ENCODE measurements at regions of chr1 and their contacts with region 1.

Region 1: DNA sequence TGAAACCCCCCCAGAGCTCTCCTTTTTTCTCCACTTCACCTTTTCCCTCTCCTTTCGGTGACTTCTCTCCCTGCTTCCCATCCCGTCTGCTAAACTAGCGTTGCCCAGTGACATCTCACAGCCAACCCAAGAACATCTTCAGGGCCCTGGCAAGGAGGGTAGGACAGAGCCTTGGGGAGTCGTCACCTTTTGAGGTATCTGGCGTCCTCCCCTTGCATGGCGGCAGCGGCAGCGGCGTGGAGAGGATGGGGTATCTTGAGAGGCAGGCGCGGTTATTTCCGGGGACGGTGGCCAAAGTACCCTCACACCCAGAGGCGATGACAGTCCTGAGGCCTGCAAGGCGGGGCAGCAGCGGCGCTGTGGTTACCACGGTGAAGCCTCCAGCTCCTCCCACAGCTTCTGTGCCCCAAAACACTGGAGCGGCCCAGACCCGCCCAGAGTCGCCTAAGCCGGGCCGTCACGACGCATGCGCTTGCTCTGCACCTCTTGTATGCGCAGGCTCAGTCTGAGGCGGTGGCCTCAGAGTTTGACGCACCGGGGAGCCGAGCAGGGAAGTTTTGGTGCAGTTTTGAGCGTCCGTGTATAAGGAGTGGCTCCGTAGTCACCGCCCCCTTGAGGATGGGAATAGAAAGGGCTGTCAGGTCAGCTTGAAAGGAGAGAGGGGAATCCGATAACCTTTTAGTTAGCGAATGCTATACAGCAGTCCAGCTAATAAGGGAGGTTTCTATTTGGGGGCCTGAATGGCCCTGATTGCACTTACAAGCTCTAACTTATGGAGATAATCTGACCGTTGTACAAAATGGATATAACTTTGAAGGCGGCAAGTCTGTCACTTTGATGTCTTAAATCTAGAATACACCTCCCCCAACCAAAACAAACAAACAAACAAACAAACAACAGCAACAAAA is at the start of gene KIFAP3:
- DNase-seq: peak; percentile 93 to 97 (median 95)
- H3K4me3 ChIP-seq: peak within 1 kb of the TSS; percentile 71 to 77
- H3K4me3 Mint-ChIP-seq: peak within 1 kb of the TSS; percentile 90 to 98 (median 96)
- H3K27ac ChIP-seq: peak within 1 kb of the TSS; percentile 74
- H3K27ac Mint-ChIP-seq: peak within 1 kb of the TSS; percentile 85 to 99 (median 97)
- H3K4me1 ChIP-seq: peaks cover 44% of the 10 kb centered on the region
- H3K4me1 Mint-ChIP-seq: peaks cover 39 to 61% (median 47%) of the 10 kb centered on the region in 4 donors
- H3K27me3 ChIP-seq: no peaks in the 10 kb centered on the region
- H3K27me3 Mint-ChIP-seq: peaks cover 0 to 2% of the 10 kb centered on the region in 2 donors
- total RNA-seq, gene KIFAP3: 20.2 to 22.2 TPM

Region 2: DNA sequence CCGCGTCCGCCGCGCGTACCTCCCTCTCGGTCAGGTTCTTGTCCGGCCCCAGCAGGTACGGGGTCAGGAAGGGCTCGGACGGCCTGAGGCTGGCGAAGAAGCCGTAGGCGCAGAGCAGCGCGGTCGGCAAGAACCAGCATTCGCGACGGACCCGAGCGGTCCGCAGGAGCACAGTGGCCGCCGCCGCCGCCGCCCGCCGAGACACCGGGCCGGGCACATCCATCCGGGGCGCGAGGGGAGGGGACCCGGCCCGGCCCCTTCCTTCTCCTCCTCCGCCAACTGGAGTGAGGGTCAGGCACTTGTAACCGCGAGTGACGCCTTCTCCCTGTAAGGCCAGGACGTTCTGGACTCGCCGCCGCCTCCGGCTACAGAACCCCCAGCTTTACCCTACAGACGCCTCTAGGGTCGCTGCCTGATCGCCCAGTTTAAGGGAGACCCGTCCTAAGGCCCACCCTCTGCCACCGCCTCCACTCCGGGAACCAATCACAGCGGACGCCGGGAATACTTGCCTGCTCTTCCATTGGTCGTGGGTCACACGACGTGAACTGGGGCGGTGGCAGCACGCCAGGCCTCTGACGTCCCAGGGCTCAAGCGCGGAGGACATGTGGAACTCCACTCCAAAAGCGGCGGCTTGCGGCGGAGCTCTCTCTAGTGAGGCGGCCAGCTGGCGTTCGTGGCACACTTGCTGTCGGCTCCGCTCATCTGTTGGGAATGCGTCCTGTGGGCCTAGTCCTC is 588.8 kb before region 1 on chr1 and contains the start of gene SLC19A2:
- CTCF ChIA-PET with region 1: no interaction called
- POLR2A ChIA-PET with region 1: interaction called, 3 read pairs
- intact Hi-C with region 1: loop called (anchors 10 kb)
- DNase-seq: peak; percentile 89 to 96 (median 91)
- H3K4me3 ChIP-seq: peak within 1 kb of the TSS; percentile 60 to 63
- H3K4me3 Mint-ChIP-seq: peak within 1 kb of the TSS; percentile 93 to 97 (median 95)
- H3K27ac ChIP-seq: peak within 1 kb of the TSS; percentile 73
- H3K27ac Mint-ChIP-seq: peak within 1 kb of the TSS; percentile 88 to 96 (median 94)
- H3K4me1 ChIP-seq: peaks cover 20% of the 10 kb centered on the region
- H3K4me1 Mint-ChIP-seq: peaks cover 28 to 37% (median 30%) of the 10 kb centered on the region in 4 donors
- H3K27me3 ChIP-seq: no peaks in the 10 kb centered on the region
- H3K27me3 Mint-ChIP-seq: no peaks in the 10 kb centered on the region
- total RNA-seq, gene SLC19A2: 4.1 to 4.5 TPM

Region 3: GRCh38 chr1:170531758-170532657 is 457.5 kb after region 1 on chr1 and contains the start of gene GORAB:
- CTCF ChIA-PET with region 1: interaction called, 4 read pairs
- POLR2A ChIA-PET with region 1: interaction called, 3 read pairs
- intact Hi-C with region 1: loop called (anchors 5 kb)
- DNase-seq: peak; percentile 84 to 93 (median 90)
- H3K4me3 ChIP-seq: peak within 1 kb of the TSS; percentile 87 to 90
- H3K4me3 Mint-ChIP-seq: no peak within 1 kb of the TSS
- H3K27ac ChIP-seq: peak within 1 kb of the TSS; percentile 92
- H3K27ac Mint-ChIP-seq: peak within 1 kb of the TSS in 3 of 7 donors; percentile 44 to 75 (median 51)
- H3K4me1 ChIP-seq: peaks cover 27% of the 10 kb centered on the region
- H3K4me1 Mint-ChIP-seq: peaks cover 11 to 22% (median 12%) of the 10 kb centered on the region in 4 donors
- H3K27me3 ChIP-seq: no peaks in the 10 kb centered on the region
- H3K27me3 Mint-ChIP-seq: no peaks in the 10 kb centered on the region
- total RNA-seq, gene GORAB: 17.0 to 24.1 TPM

Measured in CD4-positive, alpha-beta memory T cell (primary cell).